H1 (cell line): ENCODE measurements at regions of chr20 and their contacts with region 1.

Region 1: DNA sequence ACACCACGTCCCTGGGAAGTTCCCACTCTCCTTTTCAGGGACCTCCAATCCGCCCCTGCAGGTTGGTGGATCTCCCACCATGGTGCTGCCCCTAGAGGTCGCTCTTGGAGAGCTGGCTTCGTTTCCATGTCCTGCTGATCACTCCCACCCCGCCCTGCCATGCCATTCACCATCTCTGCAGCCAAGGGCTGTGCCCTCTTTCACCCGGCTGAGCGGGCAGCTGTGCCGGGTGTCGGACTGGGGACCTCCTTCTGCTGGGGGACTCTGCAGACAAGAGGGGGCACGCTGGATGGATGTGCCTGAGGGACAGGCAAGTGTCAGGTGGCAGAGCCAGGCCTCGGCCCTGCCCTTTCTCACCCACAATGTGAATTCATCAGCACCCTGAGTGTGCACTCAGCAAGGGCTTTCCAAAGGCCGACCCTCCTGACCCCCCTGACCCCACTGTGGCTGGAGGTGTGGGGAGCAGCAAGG is 347.0 kb downstream of the CDH4 start:
- DNase-seq: peak in 1 of 2 experiments; percentile 82
- H3K4me3 ChIP-seq: no peak overlapping the region
- H3K27ac ChIP-seq: no peak overlapping the region
- H3K4me1 ChIP-seq: peaks cover 0 to 7% (median 0%) of the 10 kb centered on the region in 4 experiments; a peak in 3 of 7 replicates
- H3K27me3 ChIP-seq: peaks cover 0 to 2% (median under 1%) of the 10 kb centered on the region in 4 experiments; a peak in 1 of 7 replicates
- CTCF ChIP-seq: peak; percentile 74 to 84 (median 76)
- EP300 ChIP-seq: no peak
- POLR2A ChIP-seq: no peak
- RAD21 ChIP-seq: peak; percentile 74

Region 2: DNA sequence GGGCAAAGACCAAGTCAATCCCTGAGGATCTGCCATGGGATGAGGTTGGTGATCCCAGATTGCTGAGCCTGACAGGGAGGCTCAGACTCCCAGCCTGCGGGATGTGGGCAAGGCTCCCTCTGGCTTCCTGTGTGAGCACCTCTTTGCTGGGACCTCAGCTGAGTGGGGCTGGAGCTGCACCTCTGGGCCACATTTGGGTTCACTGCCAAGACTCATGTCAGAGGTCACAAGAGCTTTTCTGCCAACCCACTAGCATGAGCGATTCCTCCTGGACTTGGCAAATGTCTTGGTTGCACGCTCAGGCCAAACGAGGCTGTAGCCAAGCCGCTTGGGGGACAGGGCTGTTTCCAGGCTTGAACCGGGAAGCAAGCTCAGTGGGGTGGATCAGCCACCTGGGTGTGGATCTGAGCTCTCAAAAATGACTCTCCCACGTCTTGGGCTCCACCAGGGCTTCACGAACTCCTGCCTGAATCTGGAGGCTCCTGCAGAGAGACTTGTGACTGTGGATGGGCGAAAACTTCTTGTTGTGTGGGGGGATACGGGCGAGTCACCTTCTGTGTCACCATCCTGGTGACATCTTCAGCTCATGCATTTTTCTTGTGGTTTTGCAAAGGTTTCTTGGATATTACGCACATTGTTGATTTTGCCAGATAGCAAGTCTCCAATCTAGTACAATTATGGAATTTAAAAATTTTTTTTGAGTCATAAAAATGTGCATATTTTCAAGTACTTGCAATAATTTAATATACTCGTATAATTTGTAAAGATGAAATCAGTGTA is 12.5 kb after region 1 on chr20:
- CTCF ChIA-PET with region 1: interaction called, 10 read pairs
- POLR2A ChIA-PET with region 1: no interaction called
- DNase-seq: no peak
- H3K4me3 ChIP-seq: no peak overlapping the region
- H3K27ac ChIP-seq: no peak overlapping the region
- H3K4me1 ChIP-seq: no peaks in the 10 kb centered on the region
- H3K27me3 ChIP-seq: peaks cover 0 to 7% (median 3%) of the 10 kb centered on the region in 4 experiments; a peak in 2 of 7 replicates
- CTCF ChIP-seq: no peak
- EP300 ChIP-seq: no peak
- POLR2A ChIP-seq: no peak
- RAD21 ChIP-seq: no peak